Activated CD4-positive, alpha-beta memory T cell treated with anti-CD3 and anti-CD28 coated beads, Interleukin-2, amount 10 ng/mL, durations not matched to agents 7 days and 5 days (primary cell): ENCODE measurements at regions of chr11 and their contacts with region 1.

Region 1: GRCh38 chr11:61792310-61793085 is at the starts of genes FEN1 and TMEM258:
- DNase-seq: peak; percentile 90
- H3K4me3 Mint-ChIP-seq: peak within 1 kb of the TSS; percentile 94
- H3K27ac Mint-ChIP-seq: peak within 1 kb of the TSS; percentile 96
- H3K4me1 Mint-ChIP-seq: peaks cover 60% of the 10 kb centered on the region
- H3K27me3 Mint-ChIP-seq: no peaks in the 10 kb centered on the region
- total RNA-seq, gene FEN1: 104 to 105 TPM
- total RNA-seq, gene TMEM258: 192 to 196 TPM

Region 2: GRCh38 chr11:61764606-61765260 is 27.8 kb before region 1 on chr11:
- CTCF ChIA-PET with region 1: no interaction called
- POLR2A ChIA-PET with region 1: no interaction called
- DNase-seq: no peak
- H3K4me3 Mint-ChIP-seq: no peak overlapping the region
- H3K27ac Mint-ChIP-seq: no peak overlapping the region
- H3K4me1 Mint-ChIP-seq: no peaks in the 10 kb centered on the region
- H3K27me3 Mint-ChIP-seq: no peaks in the 10 kb centered on the region

Region 3: DNA sequence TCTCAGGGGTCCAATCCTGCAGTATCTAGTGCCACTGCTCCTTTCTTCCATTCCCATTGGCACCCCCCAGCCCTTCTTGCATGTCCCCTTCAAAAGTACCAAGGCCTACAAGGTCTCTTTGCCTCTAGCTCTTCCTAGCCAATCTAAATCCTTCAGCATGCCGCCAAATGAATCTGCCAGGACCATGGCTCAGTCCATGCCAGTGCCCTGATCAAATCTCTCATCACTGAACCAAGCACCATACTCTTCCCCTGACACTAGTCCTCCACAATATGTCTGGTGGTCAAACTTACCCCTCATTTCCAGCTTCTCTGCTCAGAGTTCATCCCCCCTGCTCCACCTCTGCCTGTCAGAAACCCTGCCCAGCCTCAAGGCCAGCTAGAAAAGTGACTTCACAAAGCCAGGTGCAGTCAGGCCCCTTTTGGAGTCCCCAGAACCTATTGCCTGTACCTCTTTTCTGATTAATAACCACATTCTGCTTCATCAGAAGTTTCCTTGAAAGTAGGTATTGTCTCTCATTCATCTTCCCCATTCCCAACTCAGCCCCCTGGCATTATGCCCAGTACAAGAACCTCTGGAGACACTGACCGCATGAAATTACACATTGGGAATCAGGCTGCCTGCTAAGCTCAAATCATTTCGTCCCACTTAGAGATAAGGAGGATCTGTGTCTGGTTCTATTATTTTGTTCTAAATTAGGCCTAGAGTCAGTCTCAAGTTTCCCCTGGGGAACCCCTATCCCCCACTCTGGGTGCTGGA is 11.6 kb after region 1 on chr11:
- CTCF ChIA-PET with region 1: interaction called, 32 read pairs
- POLR2A ChIA-PET with region 1: interaction called, 31 read pairs
- DNase-seq: no peak
- H3K4me3 Mint-ChIP-seq: no peak overlapping the region
- H3K27ac Mint-ChIP-seq: peak overlapping the region; percentile 7
- H3K4me1 Mint-ChIP-seq: peaks cover 13% of the 10 kb centered on the region
- H3K27me3 Mint-ChIP-seq: no peaks in the 10 kb centered on the region

Region 4: DNA sequence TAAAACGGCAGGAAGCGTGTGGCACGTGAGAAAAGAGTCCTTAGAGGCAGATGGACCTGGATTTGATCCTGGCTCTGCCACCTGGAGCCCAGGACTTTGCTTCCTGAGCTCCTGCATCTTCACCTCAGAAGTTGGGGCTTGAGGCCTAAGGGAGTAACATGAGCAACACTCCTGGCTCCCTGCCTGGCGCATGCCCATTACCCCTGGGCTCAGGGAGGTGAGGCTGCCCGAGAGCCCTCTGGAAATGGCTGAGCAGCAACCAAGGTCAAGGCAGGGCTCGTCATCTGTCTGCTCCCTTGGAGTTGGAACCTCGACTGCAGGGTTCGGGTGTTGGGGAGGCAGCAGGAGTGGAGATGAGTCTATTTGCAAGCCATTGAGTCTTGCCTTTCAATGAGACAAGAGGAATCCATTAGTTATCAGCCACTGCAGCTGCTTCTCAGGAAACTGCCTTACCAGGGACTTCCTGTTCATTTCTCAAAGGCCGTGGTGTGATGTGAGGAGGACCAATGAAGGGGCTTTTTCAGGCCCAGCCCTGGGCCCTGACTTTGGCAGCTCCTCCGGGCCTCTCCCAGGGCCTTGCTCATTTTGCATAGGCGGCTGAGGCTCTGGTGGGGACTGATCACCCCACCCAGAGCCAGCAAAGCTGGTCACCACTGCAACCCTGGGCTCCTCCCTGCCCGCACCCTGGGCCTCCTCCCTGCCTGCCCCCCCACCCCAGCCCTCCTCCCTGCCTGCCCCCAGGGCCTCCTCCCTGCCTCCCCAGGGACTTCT is 42.0 kb after region 1 on chr11:
- CTCF ChIA-PET with region 1: interaction called, 6 read pairs
- POLR2A ChIA-PET with region 1: interaction called, 44 read pairs
- DNase-seq: peak; percentile 86
- H3K4me3 Mint-ChIP-seq: peak overlapping the region; percentile 58
- H3K27ac Mint-ChIP-seq: peak overlapping the region; percentile 99
- H3K4me1 Mint-ChIP-seq: peaks cover 67% of the 10 kb centered on the region
- H3K27me3 Mint-ChIP-seq: peaks cover 1% of the 10 kb centered on the region

Region 5: GRCh38 chr11:61899146-61899841 is 106.8 kb after region 1 on chr11:
- CTCF ChIA-PET with region 1: interaction called, 33 read pairs
- POLR2A ChIA-PET with region 1: interaction called, 3 read pairs
- DNase-seq: peak; percentile 91
- H3K4me3 Mint-ChIP-seq: no peak overlapping the region
- H3K27ac Mint-ChIP-seq: no peak overlapping the region
- H3K4me1 Mint-ChIP-seq: peaks cover 4% of the 10 kb centered on the region
- H3K27me3 Mint-ChIP-seq: peaks cover 2% of the 10 kb centered on the region

Region 6: GRCh38 chr11:62081378-62082291 is 289.1 kb after region 1 on chr11:
- CTCF ChIA-PET with region 1: interaction called, 41 read pairs
- POLR2A ChIA-PET with region 1: interaction called, 5 read pairs
- DNase-seq: peak; percentile 83
- H3K4me3 Mint-ChIP-seq: no peak overlapping the region
- H3K27ac Mint-ChIP-seq: no peak overlapping the region
- H3K4me1 Mint-ChIP-seq: peaks cover 8% of the 10 kb centered on the region
- H3K27me3 Mint-ChIP-seq: no peaks in the 10 kb centered on the region